ENCODE measurements at regions of chr2 and their contacts with region 1.

Region 1: GRCh38 chr2:69914170-69914960 is 544 bp upstream of the MXD1 start:
- DNase-seq: peak; percentile 99 to 100
- ATAC-seq: peak; percentile 94 to 95
- H3K4me3 ChIP-seq: peak overlapping the region; percentile 57
- H3K27ac ChIP-seq: peak overlapping the region; percentile 86 to 95
- H3K4me1 ChIP-seq: peaks cover 17% of the 10 kb centered on the region; the same call in 2 of the 3 replicates
- CTCF ChIP-seq: peak; percentile 42
- EP300 ChIP-seq: no peak
- POLR2A ChIP-seq: peak; percentile 88
- RAD21 ChIP-seq: peak; percentile 50 to 71

Region 2: DNA sequence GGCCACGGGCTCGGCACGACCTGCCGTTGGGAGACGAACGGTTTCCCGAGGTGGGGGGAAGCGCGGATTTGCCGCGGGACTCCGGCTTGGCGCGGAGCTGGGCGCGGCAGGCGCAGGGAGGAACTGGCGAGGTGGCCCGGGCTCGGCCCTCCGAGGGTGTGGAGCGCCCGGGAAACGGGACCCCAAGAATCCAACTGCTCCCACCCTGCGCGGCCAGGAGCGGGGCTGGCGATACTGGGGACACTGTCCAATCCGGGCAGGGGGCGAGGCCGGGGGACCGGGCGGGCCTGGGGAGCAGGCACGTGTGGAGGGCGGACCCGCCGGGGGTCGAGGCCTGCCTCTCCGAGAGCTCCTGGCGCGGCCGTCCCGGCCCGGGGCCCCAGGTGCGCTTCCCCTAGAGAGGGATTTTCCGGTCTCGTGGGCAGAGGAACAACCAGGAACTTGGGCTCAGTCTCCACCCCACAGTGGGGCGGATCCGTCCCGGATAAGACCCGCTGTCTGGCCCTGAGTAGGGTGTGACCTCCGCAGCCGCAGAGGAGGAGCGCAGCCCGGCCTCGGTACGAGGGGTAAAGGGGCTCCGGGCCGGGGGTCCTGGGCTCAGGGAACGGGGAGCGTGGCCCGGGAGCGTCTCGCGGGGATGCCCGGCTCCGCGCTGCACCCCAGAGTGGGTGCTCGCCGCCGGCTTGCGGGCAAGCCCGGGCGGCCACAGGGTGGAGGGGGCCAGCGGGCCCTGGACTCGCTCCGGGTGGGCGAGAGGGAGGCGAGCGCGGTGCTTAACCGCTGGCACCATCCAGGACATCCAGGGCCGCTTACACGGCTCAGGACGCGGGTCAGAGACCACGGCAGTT is 172.5 kb before region 1 on chr2 and contains the start of gene ANXA4:
- CTCF ChIA-PET with region 1: interaction called, 3 read pairs
- POLR2A ChIA-PET with region 1: interaction called, 10 read pairs
- DNase-seq: peak; percentile 91 to 93
- ATAC-seq: peak; percentile 88 to 94
- H3K4me3 ChIP-seq: peak within 1 kb of the TSS; percentile 76
- H3K27ac ChIP-seq: peak within 1 kb of the TSS; percentile 90 to 99
- H3K4me1 ChIP-seq: peaks cover 58% of the 10 kb centered on the region
- CTCF ChIP-seq: no peak
- EP300 ChIP-seq: peak in 1 of 2 experiments; percentile 17; a peak in 1 of 5 replicates
- POLR2A ChIP-seq: peak; percentile 89
- RAD21 ChIP-seq: peak in 1 of 2 experiments; percentile 19; a peak in 3 of 5 replicates
- polyA plus RNA-seq, gene ANXA4: 341 and 360 TPM in 2 replicates

Region 3: DNA sequence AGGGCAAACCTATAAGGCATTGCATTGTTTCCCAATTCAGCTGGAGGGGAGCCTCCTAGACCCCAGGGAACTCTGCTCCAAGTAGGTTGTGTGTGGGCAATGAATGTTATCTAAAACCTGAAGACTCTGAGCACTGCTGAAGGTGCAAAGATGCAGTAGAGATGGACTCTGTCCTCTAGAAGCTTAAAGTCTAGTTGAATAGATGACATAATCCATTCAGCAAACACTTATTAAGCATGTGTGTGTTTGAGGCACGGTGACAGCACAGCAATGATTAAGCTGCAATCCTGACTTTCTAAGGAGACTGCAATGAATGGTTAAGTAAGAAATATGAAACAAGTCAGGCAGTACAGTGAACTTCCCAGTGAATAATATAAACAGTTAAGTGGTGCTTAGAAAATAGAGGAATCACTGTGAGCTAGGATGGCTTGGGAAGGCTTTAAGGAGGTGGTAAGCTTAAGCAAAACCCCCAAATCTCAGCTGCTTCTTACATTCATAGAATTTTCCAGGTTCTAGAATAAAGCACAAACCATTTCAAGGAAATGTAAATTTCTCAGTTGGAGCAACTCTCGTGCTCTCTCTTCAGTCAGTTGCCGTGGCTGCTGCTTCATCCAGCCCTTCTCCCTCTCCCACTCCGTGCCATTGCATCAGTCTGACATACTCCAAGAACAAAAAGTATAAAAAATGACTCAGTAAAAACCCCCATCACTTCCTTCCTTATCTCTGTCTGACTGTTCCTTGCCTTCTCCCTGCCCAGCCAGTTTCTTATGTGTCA is 19.7 kb after region 1 on chr2:
- CTCF ChIA-PET with region 1: interaction called, 7 read pairs
- POLR2A ChIA-PET with region 1: interaction called, 26 read pairs
- DNase-seq: peak; percentile 60 to 70
- ATAC-seq: peak; percentile 89 to 90
- H3K4me3 ChIP-seq: no peak overlapping the region
- H3K27ac ChIP-seq: peak overlapping the region; percentile 72 to 81
- H3K4me1 ChIP-seq: peaks cover 23% of the 10 kb centered on the region; the same call in 2 of the 3 replicates
- CTCF ChIP-seq: no peak
- EP300 ChIP-seq: no peak
- POLR2A ChIP-seq: no peak
- RAD21 ChIP-seq: no peak

Region 4: DNA sequence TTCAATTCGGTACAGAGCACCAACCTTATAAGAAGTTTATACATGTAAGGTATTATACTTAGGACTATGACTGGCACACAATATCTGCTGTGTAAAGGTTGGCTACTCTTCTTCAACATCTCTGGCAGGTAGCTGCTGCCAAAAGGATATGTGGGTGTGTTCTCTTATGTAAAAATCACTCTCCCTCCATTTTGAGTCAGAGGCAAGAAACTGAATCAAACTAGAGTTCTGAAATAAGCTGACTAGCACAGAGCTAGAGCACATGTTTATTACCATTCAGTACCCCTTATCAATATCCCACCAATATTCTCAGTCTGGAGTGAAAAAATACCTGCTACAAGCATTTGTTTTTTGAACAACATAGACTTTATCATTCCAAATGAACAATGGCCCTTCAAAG is 134.9 kb after region 1 on chr2:
- CTCF ChIA-PET with region 1: no interaction called
- POLR2A ChIA-PET with region 1: no interaction called
- DNase-seq: no peak
- ATAC-seq: no peak
- H3K4me3 ChIP-seq: no peak overlapping the region
- H3K27ac ChIP-seq: no peak overlapping the region
- H3K4me1 ChIP-seq: no peaks in the 10 kb centered on the region
- CTCF ChIP-seq: no peak
- EP300 ChIP-seq: no peak
- POLR2A ChIP-seq: no peak
- RAD21 ChIP-seq: no peak

Region 5: DNA sequence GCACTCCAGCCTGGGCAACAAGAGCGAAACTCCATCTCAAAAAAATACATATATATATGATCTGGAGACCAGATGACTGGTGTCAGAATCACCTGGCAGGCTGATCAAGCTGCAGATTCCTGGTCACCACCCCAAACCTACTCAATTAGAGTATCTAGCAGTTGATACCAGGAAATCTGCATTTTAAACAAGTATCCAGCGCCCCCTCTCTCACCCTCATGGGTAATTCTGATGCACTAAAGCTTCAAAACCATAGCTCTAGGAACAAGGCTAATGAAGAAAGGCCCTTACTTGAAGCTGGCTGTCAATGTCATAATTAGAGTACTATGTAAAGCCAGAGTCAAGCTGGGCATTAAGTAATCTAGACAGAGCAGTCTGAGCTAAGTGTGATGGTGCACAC is 147.9 kb after region 1 on chr2:
- CTCF ChIA-PET with region 1: interaction called, 161 read pairs
- POLR2A ChIA-PET with region 1: interaction called, 18 read pairs
- DNase-seq: no peak
- ATAC-seq: peak in 1 of 2 experiments; percentile 22; a peak in 2 of 6 replicates
- H3K4me3 ChIP-seq: no peak overlapping the region
- H3K27ac ChIP-seq: no peak overlapping the region
- H3K4me1 ChIP-seq: no peaks in the 10 kb centered on the region
- CTCF ChIP-seq: no peak
- EP300 ChIP-seq: no peak
- POLR2A ChIP-seq: no peak
- RAD21 ChIP-seq: no peak

Region 6: GRCh38 chr2:70086838-70087701 is 172.7 kb after region 1 on chr2 and contains the start of gene PCBP1:
- CTCF ChIA-PET with region 1: interaction called, 32 read pairs
- POLR2A ChIA-PET with region 1: interaction called, 51 read pairs
- DNase-seq: peak; percentile 96 to 97
- ATAC-seq: peak; percentile 62 to 64
- H3K4me3 ChIP-seq: peak within 1 kb of the TSS; percentile 96
- H3K27ac ChIP-seq: peak within 1 kb of the TSS; percentile 96 to 100
- H3K4me1 ChIP-seq: peaks cover 30% of the 10 kb centered on the region
- CTCF ChIP-seq: no peak
- EP300 ChIP-seq: peak in 1 of 2 experiments; percentile 48; a peak in 1 of 5 replicates
- POLR2A ChIP-seq: peak; percentile 57
- RAD21 ChIP-seq: peak in 1 of 2 experiments; percentile 0; a peak in 1 of 5 replicates
- polyA plus RNA-seq, gene PCBP1: 86.8 and 134 TPM in 2 replicates

Region 7: GRCh38 chr2:70137519-70137918 is 223.2 kb after region 1 on chr2:
- CTCF ChIA-PET with region 1: interaction called, 89 read pairs
- POLR2A ChIA-PET with region 1: interaction called, 87 read pairs
- DNase-seq: peak in 1 of 2 experiments; percentile 56
- ATAC-seq: no peak
- H3K4me3 ChIP-seq: no peak overlapping the region
- H3K27ac ChIP-seq: peak overlapping the region; percentile 90
- H3K4me1 ChIP-seq: peaks cover 51% of the 10 kb centered on the region
- CTCF ChIP-seq: no peak
- EP300 ChIP-seq: no peak
- POLR2A ChIP-seq: no peak
- RAD21 ChIP-seq: no peak

Region 8: DNA sequence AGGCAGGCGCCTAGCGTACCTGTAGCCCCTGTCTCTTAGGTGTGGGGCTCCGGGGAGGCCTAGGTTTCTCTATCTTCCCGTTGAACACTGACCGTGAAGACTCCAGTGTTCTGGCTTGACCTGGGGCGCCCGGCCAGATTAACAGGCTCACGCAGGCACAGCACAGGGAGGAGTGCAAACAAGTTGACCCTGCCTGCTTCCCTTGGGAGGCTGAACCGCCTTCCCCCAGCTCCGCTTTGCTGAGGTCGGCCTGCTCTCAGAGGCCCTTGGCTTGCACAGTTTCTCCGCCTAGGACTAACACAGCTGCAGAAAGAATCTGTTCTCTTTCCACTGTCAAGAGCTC is 344.1 kb after region 1 on chr2:
- CTCF ChIA-PET with region 1: no interaction called
- POLR2A ChIA-PET with region 1: interaction called, 19 read pairs
- DNase-seq: peak in 1 of 2 experiments; percentile 34
- ATAC-seq: peak in 1 of 2 experiments; percentile 36; a peak in 5 of 6 replicates
- H3K4me3 ChIP-seq: peak overlapping the region; percentile 66
- H3K27ac ChIP-seq: peak overlapping the region; percentile 86 to 93
- H3K4me1 ChIP-seq: peaks cover 5% of the 10 kb centered on the region; the same call in 1 of the 3 replicates
- CTCF ChIP-seq: no peak
- EP300 ChIP-seq: no peak
- POLR2A ChIP-seq: no peak
- RAD21 ChIP-seq: no peak